ENCODE measurements at regions of chr11 and their contacts with region 1.

Region 1: GRCh38 chr11:64878494-64879243 is at the start of gene EHD1:
- DNase-seq: peak; percentile 96
- H3K4me3 ChIP-seq: peak within 1 kb of the TSS; percentile 64 to 99 (median 99)
- H3K27ac ChIP-seq: peak within 1 kb of the TSS; percentile 46
- H3K4me1 ChIP-seq: peaks cover 27% of the 10 kb centered on the region
- H3K27me3 ChIP-seq: no peaks in the 10 kb centered on the region
- CTCF ChIP-seq: peak; percentile 18 to 73
- total RNA-seq, gene EHD1: 71.2 to 172 TPM

Region 2: DNA sequence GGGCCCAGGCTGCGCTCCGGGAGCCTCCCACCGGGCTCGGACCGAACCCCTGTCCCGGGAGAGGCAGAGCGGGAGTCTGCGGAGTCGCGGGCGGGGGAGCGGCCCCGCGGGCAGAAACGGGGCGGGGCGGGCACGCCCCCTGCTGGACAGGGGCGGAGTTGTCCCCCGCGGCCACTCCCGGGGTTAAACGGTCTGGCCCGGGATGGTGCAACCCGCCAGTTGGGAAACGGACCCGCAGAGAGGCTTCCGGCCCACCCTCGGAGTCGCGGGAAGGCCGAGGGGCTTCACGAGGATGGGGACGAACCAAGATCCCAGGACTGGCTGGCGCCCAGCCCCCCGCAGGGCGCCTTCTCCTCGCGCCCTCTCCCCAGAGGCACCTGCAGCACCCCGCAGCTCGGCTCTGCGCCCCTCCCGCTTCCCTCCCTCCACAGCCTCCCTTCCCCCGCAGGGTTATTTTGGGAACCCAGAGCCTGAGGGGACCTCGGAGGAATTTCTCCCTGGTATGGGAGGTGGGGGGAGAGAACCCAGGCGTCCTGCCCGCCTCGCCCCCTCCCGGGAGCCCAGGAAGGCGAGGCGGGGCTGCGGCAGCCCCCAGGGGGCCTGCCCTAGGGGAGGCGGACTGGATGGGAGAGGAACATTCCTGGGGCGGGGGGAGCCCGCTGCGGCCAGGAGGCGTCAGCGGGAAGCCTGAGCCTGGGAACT is 135.6 kb before region 1 on chr11:
- CTCF ChIA-PET with region 1: no interaction called
- dilution Hi-C with region 1: no loop called
- in situ Hi-C with region 1: no loop called
- intact Hi-C with region 1: no loop called
- DNase-seq: peak; percentile 28
- H3K4me3 ChIP-seq: peak overlapping the region; percentile 26 to 47 (median 34)
- H3K27ac ChIP-seq: no peak overlapping the region
- H3K4me1 ChIP-seq: peaks cover 24% of the 10 kb centered on the region
- H3K27me3 ChIP-seq: peaks cover 18% of the 10 kb centered on the region
- CTCF ChIP-seq: peak; percentile 45 to 81

Region 3: GRCh38 chr11:64810271-64810890 is 68.3 kb before region 1 on chr11 and contains the start of gene MEN1:
- CTCF ChIA-PET with region 1: no interaction called
- dilution Hi-C with region 1: no loop called
- in situ Hi-C with region 1: no loop called
- intact Hi-C with region 1: loop called (anchors 2 kb)
- DNase-seq: peak; percentile 94
- H3K4me3 ChIP-seq: peak within 1 kb of the TSS; percentile 85 to 99 (median 89)
- H3K27ac ChIP-seq: peak within 1 kb of the TSS; percentile 31
- H3K4me1 ChIP-seq: peaks cover 6% of the 10 kb centered on the region
- H3K27me3 ChIP-seq: no peaks in the 10 kb centered on the region
- CTCF ChIP-seq: no peak
- total RNA-seq, gene MEN1: 20.7 to 35.7 TPM

Region 4: DNA sequence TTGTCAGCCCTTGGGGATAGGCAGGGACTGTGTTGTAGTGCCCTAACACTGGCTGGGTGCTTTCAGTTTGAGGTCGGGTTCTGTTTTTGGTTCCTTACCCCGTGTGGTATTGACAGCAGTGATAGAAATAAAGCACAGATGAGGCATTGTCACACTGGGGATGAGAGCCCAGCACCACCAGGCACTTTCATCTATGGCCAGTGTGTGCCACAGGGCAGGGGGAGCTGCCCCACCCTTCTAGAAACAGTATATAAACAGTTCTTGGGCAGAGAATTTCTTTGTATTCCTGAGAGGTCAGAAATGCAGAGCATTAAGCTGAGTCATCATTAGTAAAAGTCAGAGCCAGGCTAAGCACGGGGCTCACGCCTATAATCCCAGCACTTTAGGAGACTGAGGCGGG is 412.9 kb after region 1 on chr11:
- CTCF ChIA-PET with region 1: no interaction called
- dilution Hi-C with region 1: no loop called
- in situ Hi-C with region 1: no loop called
- intact Hi-C with region 1: no loop called
- DNase-seq: no peak
- H3K4me3 ChIP-seq: no peak overlapping the region
- H3K27ac ChIP-seq: no peak overlapping the region
- H3K4me1 ChIP-seq: no peaks in the 10 kb centered on the region
- H3K27me3 ChIP-seq: no peaks in the 10 kb centered on the region
- CTCF ChIP-seq: no peak

Measured in mammary epithelial cell (primary cell).